Colonic mucosa (tissue), 4 donors: ENCODE measurements at regions of chr10 and their contacts with region 1.

Region 1: DNA sequence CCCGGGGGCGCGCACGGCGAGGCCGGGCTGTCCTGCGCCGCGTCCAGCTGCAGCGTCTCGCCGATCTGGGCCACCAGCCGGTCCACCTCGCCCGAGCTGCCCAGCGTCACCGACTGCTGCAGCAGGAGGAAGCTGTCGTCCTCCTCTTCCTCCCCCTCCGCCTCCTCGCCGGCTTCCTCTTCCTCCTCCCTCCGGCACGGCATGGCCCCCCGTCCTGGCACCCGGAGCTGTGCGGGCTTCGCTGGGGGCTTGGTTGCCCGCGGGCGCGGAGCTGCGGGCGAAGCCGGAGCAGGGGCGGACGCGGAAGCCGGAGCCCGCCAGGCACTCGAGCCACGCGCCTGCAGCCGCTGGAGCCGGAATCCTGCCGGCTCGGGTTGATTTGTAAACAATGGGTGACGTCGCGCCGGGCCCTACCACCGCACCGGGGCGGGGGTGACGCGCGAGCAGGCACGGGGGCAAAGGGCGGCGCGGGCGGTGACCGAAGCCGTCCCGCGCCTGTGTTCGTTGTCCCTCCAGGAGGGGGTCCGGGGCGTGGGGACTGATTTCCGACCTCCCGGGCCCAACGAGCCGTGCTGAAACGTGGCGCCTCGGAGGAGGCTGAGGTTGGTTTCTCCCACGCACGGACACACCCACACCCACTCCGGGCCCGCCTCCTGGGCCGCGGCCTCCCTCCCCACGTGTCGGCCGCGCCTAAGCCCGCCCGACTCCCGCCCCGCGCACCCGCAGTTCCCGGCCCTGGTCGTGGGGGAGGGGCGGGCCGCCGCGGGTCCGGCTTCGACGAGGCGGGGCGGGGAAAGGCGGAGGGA is at the start of gene FRAT2:
- DNase-seq: peak; percentile 93
- H3K4me3 ChIP-seq: peak within 1 kb of the TSS; percentile 73
- H3K27ac ChIP-seq: peak within 1 kb of the TSS; percentile 86
- H3K4me1 ChIP-seq: peaks cover 12% of the 10 kb centered on the region
- H3K27me3 ChIP-seq: no peaks in the 10 kb centered on the region
- CTCF ChIP-seq: no peak
- total RNA-seq, gene FRAT2: 34.3 to 53.1 TPM

Region 2: GRCh38 chr10:97072851-97073665 is 261.5 kb before region 1 on chr10:
- intact Hi-C with region 1: no loop called
- DNase-seq: peak; percentile 77
- H3K4me3 ChIP-seq: no peak overlapping the region
- H3K27ac ChIP-seq: no peak overlapping the region
- H3K4me1 ChIP-seq: no peaks in the 10 kb centered on the region
- H3K27me3 ChIP-seq: no peaks in the 10 kb centered on the region
- CTCF ChIP-seq: peak; percentile 92

Region 3: GRCh38 chr10:97278491-97278989 is 56.0 kb before region 1 on chr10:
- intact Hi-C with region 1: loop called (anchors 5 kb)
- DNase-seq: no peak
- H3K4me3 ChIP-seq: no peak overlapping the region
- H3K27ac ChIP-seq: no peak overlapping the region
- H3K4me1 ChIP-seq: no peaks in the 10 kb centered on the region
- H3K27me3 ChIP-seq: no peaks in the 10 kb centered on the region
- CTCF ChIP-seq: peak; percentile 48

Region 4: DNA sequence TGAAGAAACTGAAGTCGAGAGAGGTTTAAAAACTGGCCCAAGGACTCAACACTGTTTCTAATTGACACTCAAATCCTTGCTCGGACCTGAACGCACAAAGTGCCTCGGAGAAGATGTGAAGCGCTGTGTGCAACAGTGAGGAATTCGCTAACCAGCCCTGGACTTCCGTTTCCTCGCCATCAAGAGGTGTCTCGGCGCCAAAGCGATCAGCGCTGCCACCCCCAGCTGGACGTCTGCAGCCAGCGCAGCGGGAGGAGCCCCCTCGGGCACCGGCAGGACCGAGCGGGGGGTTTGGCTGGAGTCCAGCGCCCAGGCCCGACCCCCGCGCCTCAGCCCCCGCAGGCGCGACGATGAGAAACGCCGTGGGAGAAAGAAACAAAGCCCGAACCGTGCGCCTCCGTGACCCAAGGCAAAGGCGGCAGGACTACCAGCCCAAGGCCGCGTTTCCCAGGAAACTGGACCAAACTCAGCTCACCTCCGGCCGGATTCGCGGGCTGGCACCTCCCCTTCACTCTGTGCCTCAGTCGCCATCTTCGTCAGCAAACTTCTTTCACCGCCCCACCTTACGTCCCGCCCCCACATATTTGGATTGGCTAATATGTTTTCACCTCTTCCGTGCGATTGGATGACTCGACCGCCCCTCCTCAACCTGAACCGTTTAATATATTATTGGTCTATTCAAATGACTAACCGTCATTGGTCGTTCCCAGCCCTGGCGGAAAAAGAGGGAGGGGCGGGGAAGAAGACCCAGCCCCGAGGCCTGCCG is 42.3 kb before region 1 on chr10 and contains the start of gene ARHGAP19:
- intact Hi-C with region 1: loop called (anchors 5 kb)
- DNase-seq: peak; percentile 96
- H3K4me3 ChIP-seq: peak within 1 kb of the TSS; percentile 72
- H3K27ac ChIP-seq: peak within 1 kb of the TSS; percentile 98
- H3K4me1 ChIP-seq: no peaks in the 10 kb centered on the region
- H3K27me3 ChIP-seq: no peaks in the 10 kb centered on the region
- CTCF ChIP-seq: no peak
- total RNA-seq, gene ARHGAP19: 8.0 to 9.8 TPM